AG04450 (cell line): ENCODE measurements at regions of chr4 and their contacts with region 1.

Region 1: GRCh38 chr4:39548428-39548921 is 21.2 kb upstream of the UGDH start:
- DNase-seq: no peak
- H3K4me3 ChIP-seq: no peak overlapping the region
- H3K27ac ChIP-seq: no peak overlapping the region
- H3K27me3 ChIP-seq: no peaks in the 10 kb centered on the region
- CTCF ChIP-seq: no peak

Region 2: DNA sequence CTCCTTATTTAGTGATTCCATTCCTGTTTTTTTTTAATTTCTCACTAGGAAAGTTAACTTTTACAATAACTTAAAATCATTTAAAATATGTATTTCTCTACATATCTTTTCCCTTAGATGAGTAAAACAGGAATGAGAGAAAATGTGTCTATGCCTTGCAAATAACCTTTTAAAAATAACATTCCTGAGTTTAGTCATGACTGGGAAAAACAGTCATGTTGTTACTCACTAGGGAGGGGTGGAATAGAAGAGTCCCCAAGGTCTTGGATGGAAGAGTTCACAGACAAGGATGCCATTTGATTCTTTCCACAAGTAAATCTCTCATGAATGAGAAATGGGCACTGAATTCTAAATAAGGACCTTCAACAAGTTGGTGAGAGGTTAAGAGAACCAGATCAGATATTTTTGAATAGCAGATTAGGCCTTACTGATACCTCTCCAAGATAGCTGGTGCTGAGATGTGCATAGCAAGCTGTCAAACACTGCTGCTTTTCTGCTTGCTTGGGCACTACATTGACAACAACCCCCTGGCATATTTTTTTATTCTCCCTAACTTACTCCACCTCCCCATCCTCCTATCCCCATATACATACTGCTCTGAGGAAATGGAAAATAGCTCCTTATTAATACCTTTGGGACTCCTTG is 46.3 kb before region 1 on chr4:
- CTCF ChIA-PET with region 1: no interaction called
- POLR2A ChIA-PET with region 1: no interaction called
- DNase-seq: peak; percentile 11
- H3K4me3 ChIP-seq: no peak overlapping the region
- H3K27ac ChIP-seq: peak overlapping the region; percentile 61
- H3K27me3 ChIP-seq: no peaks in the 10 kb centered on the region
- CTCF ChIP-seq: no peak

Region 3: GRCh38 chr4:39521253-39521919 is 27.1 kb before region 1 on chr4:
- CTCF ChIA-PET with region 1: no interaction called
- POLR2A ChIA-PET with region 1: no interaction called
- DNase-seq: no peak
- H3K4me3 ChIP-seq: peak overlapping the region; percentile 15; the same call in 1 of the 2 replicates
- H3K27ac ChIP-seq: no peak overlapping the region
- H3K27me3 ChIP-seq: no peaks in the 10 kb centered on the region
- CTCF ChIP-seq: no peak

Region 4: DNA sequence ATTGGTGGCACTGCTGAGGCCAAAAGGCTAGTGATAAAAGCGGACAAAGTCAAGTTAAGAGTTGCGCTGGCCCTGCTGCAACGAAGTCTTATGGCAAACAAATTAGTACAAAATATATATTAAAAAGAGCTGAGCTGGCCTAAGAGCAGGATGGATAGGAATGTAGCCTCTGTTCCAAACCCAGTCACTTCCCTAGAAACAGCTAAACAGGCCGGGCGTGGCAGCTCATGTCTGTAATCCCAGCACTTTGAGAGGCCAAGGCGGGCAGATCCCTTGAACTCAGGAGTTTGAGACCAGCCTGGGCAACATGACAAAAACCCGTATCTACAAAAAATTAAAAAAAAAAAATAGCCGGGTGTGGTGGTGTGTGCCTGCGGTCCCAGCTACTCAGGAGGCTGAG is 11.2 kb after region 1 on chr4:
- CTCF ChIA-PET with region 1: no interaction called
- POLR2A ChIA-PET with region 1: interaction called, 20 read pairs
- DNase-seq: no peak
- H3K4me3 ChIP-seq: no peak overlapping the region
- H3K27ac ChIP-seq: no peak overlapping the region
- H3K27me3 ChIP-seq: no peaks in the 10 kb centered on the region
- CTCF ChIP-seq: no peak